ENCODE measurements at regions of chr11 and their contacts with region 1.

Region 1: GRCh38 chr11:107741044-107741823 is 29.4 kb upstream of the SLN start:
- DNase-seq: peak; percentile 30
- ATAC-seq: peak; percentile 72
- H3K4me3 Mint-ChIP-seq: no peak overlapping the region
- H3K27ac Mint-ChIP-seq: no peak overlapping the region
- H3K4me1 Mint-ChIP-seq: no peaks in the 10 kb centered on the region
- H3K27me3 Mint-ChIP-seq: peaks cover 36% of the 10 kb centered on the region

Region 2: GRCh38 chr11:107397357-107397756 is 343.9 kb before region 1 on chr11:
- CTCF ChIA-PET with region 1: no interaction called
- POLR2A ChIA-PET with region 1: no interaction called
- intact Hi-C with region 1: no loop called
- DNase-seq: no peak
- ATAC-seq: no peak
- H3K4me3 Mint-ChIP-seq: no peak overlapping the region
- H3K27ac Mint-ChIP-seq: no peak overlapping the region
- H3K4me1 Mint-ChIP-seq: no peaks in the 10 kb centered on the region
- H3K27me3 Mint-ChIP-seq: no peaks in the 10 kb centered on the region

Region 3: DNA sequence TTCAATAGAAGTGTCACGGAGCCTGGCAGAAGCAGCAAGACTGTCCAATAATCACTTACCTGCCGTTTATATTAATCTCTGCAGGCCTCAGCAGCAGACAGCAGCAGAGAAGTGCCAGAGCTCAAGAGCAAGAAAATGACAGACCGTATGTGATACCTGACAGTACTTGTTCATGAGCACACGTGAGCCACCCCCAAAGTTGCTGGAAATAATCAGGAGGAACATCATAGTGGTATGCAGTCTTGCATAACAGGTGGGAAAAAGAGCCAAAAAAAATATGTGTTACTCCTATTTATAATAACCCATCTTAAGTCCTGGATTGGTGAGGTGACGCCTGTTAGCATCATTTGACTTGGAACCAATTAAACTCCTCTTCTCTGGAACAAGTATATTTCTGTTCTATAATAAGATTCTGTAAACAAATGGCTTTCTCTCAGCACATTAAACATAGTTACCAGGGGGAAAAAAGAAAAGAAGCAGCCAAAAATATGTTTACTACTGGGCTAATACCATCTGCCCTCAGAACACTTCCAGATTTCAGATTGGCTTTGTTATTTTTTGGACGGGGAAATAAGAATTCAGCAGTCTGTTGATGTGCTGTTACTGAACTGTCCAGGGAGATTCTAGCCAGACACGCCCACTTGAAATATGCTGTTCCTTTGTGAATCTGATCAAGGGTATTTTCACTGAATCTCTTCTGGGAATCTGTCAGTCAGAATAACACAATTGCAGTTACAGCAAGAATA is 21.5 kb before region 1 on chr11:
- CTCF ChIA-PET with region 1: no interaction called
- POLR2A ChIA-PET with region 1: no interaction called
- intact Hi-C with region 1: no loop called
- DNase-seq: no peak
- ATAC-seq: no peak
- H3K4me3 Mint-ChIP-seq: no peak overlapping the region
- H3K27ac Mint-ChIP-seq: no peak overlapping the region
- H3K4me1 Mint-ChIP-seq: no peaks in the 10 kb centered on the region
- H3K27me3 Mint-ChIP-seq: peaks cover 23% of the 10 kb centered on the region

Region 4: GRCh38 chr11:107770551-107770951 is 29.3 kb after region 1 on chr11:
- CTCF ChIA-PET with region 1: interaction called, 9 read pairs
- POLR2A ChIA-PET with region 1: no interaction called
- intact Hi-C with region 1: loop called in 1 of 2 experiments (anchors 2 kb)
- DNase-seq: no peak
- ATAC-seq: peak; percentile 35
- H3K4me3 Mint-ChIP-seq: no peak overlapping the region
- H3K27ac Mint-ChIP-seq: no peak overlapping the region
- H3K4me1 Mint-ChIP-seq: peaks cover 9% of the 10 kb centered on the region
- H3K27me3 Mint-ChIP-seq: peaks cover 6% of the 10 kb centered on the region

Region 5: DNA sequence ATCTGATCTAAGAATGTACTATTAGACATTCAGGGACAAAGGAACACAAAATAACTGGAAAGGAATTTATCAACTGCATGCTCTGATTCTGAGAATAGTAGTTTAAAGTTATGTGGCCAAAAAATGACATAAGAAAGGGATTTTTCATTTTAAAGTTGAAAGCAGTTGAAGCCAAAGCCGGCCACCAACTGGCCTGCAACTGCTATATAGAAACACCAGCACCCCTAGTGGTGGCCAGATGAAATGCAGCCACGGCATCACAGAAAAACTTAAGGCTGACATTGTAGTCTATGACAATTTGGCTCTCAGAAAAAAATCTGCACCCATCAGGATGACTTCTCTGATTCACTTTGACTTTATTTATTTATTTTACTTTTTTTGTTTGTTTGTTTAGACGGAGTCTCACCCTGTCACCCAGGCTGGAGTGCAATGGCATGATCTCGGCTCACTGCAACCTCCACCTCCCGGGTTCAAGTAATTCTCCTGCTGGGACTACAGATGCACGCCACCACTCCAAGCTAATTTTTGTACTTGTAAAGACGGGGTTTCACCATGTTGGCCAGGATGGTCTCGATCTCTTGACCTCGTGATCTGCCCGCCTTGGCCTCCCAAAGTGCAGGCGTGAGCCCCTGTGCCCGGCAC is 58.1 kb after region 1 on chr11:
- CTCF ChIA-PET with region 1: interaction called, 6 read pairs
- POLR2A ChIA-PET with region 1: no interaction called
- intact Hi-C with region 1: loop called in 1 of 2 experiments (anchors 2 kb)
- DNase-seq: peak; percentile 82
- ATAC-seq: peak; percentile 81
- H3K4me3 Mint-ChIP-seq: no peak overlapping the region
- H3K27ac Mint-ChIP-seq: no peak overlapping the region
- H3K4me1 Mint-ChIP-seq: no peaks in the 10 kb centered on the region
- H3K27me3 Mint-ChIP-seq: no peaks in the 10 kb centered on the region

Region 6: DNA sequence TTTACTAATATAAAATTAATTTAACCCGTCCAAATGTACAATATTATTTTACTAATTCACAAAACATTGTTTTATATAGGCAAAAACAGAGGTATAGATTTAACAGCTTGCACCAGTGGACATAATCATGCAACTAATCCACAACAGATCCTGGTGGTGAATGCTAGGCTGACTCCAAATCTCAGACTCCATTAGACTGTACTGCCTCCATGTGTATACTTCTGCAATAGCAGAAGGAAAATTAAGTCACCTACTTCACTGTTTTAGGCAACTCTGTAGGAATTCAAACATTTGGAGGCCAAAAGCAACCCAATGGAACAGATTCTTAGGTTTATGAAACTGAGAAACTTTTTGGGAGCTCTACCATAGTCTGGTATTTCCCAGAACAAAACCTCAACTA is 157.0 kb after region 1 on chr11:
- CTCF ChIA-PET with region 1: interaction called, 13 read pairs
- POLR2A ChIA-PET with region 1: no interaction called
- intact Hi-C with region 1: loop called (anchors 1 to 2 kb)
- DNase-seq: no peak
- ATAC-seq: peak; percentile 81
- H3K4me3 Mint-ChIP-seq: no peak overlapping the region
- H3K27ac Mint-ChIP-seq: no peak overlapping the region
- H3K4me1 Mint-ChIP-seq: no peaks in the 10 kb centered on the region
- H3K27me3 Mint-ChIP-seq: peaks cover 5% of the 10 kb centered on the region